ENCODE measurements at regions of chr12 and their contacts with region 1.

Region 1: DNA sequence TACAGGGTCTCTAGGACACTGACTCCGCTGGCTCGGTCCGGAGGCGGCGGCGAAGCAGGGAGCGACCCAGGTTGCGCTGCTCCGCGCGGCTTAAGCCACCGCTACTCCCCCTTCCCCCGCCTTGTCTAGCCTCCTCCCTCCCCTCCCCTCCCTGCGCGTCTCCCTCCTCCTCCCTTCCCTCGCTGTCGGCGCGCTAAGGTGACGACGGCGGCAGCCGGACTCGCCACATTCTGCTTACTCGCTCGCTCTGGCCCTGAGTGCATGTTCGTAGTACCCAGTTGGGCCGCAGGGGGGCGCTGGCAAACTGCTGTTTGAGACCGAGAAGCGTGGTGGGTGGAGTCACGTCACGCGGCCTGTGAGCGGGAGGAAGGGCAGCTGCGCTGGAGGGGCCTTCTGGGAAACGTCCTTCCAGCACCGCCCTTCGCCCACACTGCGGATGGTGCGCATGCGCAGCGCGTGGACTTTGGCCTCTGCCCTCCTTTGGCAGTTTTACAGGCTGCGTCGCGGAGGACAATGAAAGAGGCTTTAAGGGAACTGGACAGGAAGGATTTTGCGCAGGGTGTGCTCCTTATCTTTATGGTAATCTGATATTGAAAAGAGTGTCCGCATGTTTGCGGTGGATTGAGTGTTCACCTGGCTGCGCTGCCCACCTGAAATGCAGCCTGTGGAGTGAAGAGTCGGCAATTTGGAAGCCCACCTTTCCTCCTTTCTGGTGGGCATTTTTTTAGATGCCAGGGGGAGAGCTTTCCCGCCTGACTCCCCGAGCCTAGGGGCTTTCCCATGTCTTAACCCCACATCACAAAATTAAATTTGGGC is at the start of gene SCAF11:
- DNase-seq: peak; percentile 96
- CTCF ChIP-seq: peak; percentile 96

Region 2: GRCh38 chr12:45775964-45776363 is 214.7 kb before region 1 on chr12:
- CTCF ChIA-PET with region 1: no interaction called
- POLR2A ChIA-PET with region 1: no interaction called
- DNase-seq: no peak
- CTCF ChIP-seq: no peak

Region 3: GRCh38 chr12:45918818-45919217 is 71.9 kb before region 1 on chr12:
- CTCF ChIA-PET with region 1: no interaction called
- POLR2A ChIA-PET with region 1: no interaction called
- DNase-seq: no peak
- CTCF ChIP-seq: no peak

Region 4: GRCh38 chr12:45975506-45975905 is 15.2 kb before region 1 on chr12:
- CTCF ChIA-PET with region 1: interaction called, 14 read pairs
- POLR2A ChIA-PET with region 1: no interaction called
- DNase-seq: no peak
- CTCF ChIP-seq: no peak

Region 5: GRCh38 chr12:46005151-46005797 is 14.6 kb after region 1 on chr12:
- CTCF ChIA-PET with region 1: interaction called, 14 read pairs
- POLR2A ChIA-PET with region 1: no interaction called
- DNase-seq: no peak
- CTCF ChIP-seq: peak; percentile 13

Region 6: DNA sequence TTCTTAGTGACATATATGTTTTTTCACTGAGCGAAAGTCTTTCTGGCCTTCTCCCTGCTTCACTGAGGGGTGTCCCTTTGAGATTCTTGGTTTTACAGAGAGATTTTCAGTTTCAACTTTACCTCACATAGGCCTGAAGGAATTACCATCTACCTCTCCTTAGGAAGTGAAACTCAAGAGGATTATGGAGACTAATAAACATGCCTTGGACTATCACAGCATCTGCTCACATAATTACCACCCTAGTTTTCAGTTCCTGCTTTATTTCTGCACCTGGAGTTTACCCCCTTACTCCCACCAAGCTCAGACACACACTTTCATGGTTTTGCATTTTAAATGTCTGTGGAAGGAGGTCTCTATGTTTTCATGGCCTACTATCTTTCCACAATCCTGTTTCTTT is 118.0 kb after region 1 on chr12:
- CTCF ChIA-PET with region 1: no interaction called
- POLR2A ChIA-PET with region 1: no interaction called
- DNase-seq: peak; percentile 48
- CTCF ChIP-seq: no peak